A673 (cell line): ENCODE measurements at regions of chr1 and their contacts with region 1.

Region 1: GRCh38 chr1:176374967-176375569 is 87.9 kb upstream of the PAPPA2 start:
- DNase-seq: peak; percentile 75
- H3K4me3 ChIP-seq: no peak overlapping the region
- H3K27ac ChIP-seq: no peak overlapping the region
- H3K4me1 ChIP-seq: no peaks in the 10 kb centered on the region
- H3K27me3 ChIP-seq: no peaks in the 10 kb centered on the region
- CTCF ChIP-seq: peak; percentile 90

Region 2: DNA sequence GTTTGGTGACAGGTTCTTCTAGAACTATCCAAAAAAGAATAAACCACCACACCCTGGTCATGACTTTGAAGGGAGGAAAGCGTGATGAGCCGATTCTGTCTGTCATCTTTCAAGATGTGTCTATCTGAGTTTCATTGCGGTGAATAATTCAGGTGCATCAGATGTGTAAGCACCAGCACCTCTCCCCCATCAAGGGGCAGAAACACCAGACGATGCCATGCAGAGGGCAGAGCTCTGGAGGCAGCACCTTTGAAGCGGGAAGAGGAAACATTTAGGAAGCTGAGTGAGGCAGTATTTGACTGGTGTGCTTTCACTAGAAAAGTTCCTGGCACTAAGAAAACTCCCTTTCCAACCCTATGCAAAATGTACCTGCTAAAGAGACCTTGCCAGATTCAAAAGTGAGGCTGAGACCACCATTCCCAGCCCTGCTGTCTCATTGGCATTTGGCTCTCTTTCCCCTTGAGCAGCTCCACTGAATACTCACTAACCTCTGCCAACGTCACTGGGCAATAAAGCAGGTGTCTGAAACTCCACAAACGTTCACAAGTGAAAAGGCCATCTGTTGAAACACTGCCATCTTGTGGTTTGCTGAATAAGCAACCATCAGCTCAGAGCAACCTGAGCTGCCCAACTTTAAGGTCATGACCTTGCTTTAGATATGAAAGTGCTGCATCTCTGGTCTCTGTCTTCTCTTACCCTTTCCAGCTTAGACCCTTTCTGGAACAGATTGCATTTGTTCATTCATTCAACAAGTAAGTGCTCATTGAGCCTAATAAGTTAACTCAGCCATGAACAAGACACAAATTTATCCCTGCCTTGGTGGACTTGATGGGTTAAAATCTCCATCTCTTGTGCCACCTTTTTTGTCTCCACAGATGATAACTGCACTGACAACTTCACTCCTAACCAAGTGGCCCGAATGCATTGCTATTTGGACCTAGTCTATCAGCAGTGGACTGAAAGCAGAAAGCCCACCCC is 316.5 kb after region 1 on chr1:
- CTCF ChIA-PET with region 1: interaction called, 5 read pairs
- POLR2A ChIA-PET with region 1: no interaction called
- intact Hi-C with region 1: loop called (anchors 2 kb)
- DNase-seq: peak; percentile 54
- H3K4me3 ChIP-seq: no peak overlapping the region
- H3K27ac ChIP-seq: no peak overlapping the region
- H3K4me1 ChIP-seq: no peaks in the 10 kb centered on the region
- H3K27me3 ChIP-seq: peaks cover 4% of the 10 kb centered on the region
- CTCF ChIP-seq: peak; percentile 80

Region 3: DNA sequence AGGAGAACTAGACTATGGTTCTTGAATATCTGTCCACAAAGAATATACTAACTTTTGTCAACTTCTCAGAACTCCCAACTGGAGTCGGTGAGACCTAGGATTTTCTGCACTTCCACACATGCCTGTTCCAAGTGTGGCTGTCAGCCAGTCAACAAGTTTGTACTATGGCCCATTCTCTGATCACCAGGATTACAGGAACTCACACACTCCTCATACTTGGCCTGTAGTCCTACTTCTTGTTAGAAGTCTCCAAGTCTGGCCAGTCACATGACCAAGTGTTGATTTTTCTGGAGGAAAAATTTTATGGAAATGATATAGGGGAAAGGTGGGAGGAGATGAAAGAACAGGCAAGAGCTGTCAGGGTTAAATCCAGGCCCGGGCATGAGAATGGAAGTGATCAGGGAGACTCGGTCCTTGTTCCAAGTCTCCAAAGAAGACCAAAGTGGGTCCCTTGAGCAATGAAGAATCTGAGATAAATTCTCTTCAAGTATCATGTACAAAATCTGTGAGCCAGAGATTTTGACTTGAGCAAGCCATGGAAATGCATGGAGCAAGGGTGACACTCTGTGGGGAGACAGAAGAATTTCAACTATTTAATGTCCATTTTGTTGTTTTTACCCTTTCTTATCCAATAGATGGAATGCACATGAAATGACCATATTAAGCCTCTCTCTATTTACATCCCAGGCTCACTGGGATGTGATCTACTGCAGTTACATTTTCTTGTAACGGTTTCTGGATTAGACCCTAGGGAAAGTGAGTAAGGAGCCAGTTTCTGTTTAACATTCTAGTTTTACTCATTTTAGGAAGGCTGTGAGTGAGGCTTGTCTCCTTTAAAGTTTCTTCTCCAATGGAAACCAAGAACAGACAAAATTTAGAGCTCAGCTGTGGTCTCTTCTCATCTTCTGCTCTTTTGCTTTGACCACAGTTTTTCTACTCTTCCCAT is 468.6 kb after region 1 on chr1:
- CTCF ChIA-PET with region 1: interaction called, 3 read pairs
- POLR2A ChIA-PET with region 1: no interaction called
- intact Hi-C with region 1: loop called (anchors 1 kb)
- DNase-seq: peak; percentile 65
- H3K4me3 ChIP-seq: no peak overlapping the region
- H3K27ac ChIP-seq: no peak overlapping the region
- H3K4me1 ChIP-seq: peaks cover 3% of the 10 kb centered on the region
- H3K27me3 ChIP-seq: no peaks in the 10 kb centered on the region
- CTCF ChIP-seq: peak; percentile 59

Region 4: DNA sequence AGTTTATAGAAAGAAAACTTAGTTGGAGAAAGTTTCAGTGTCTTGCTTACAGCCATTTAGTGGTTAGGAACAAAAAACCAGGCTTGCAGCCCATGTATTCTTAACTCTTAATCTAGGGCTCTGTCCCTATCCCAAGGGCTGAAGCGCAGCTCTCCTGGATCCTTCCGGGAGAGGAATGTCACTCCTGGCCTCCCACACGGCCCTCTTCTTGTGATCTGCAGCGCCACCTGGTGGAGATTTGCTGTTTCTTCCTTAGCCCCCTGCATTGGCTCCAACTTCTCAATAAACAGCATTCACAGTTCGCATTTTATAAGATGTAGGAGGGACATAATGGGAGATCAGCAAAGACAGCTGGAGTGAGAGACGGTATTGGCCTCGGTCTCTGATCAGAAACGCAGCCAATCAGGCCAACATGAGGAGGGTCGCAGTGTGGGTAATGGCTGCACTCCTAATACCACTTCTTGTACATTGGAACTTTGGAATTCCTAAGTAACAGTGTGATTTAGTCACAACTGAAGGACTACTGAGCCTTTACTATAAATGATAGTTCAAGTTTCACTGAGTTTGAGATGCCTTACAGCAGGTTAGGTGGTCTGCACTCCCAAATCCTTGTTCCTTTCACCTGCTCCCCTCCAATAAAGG is 506.0 kb after region 1 on chr1:
- CTCF ChIA-PET with region 1: no interaction called
- POLR2A ChIA-PET with region 1: no interaction called
- intact Hi-C with region 1: loop called (anchors 1 kb)
- DNase-seq: peak; percentile 84
- H3K4me3 ChIP-seq: no peak overlapping the region
- H3K27ac ChIP-seq: no peak overlapping the region
- H3K4me1 ChIP-seq: no peaks in the 10 kb centered on the region
- H3K27me3 ChIP-seq: no peaks in the 10 kb centered on the region
- CTCF ChIP-seq: peak; percentile 94